ENCODE measurements at regions of chr2 and their contacts with region 1.

Region 1: GRCh38 chr2:69163109-69163508 is 150.1 kb downstream of the ANTXR1 start:
- DNase-seq: no peak

Region 2: GRCh38 chr2:69082430-69082997 is 80.6 kb before region 1 on chr2:
- intact Hi-C with region 1: loop called (anchors 5 kb)
- DNase-seq: no peak